Activated CD8-positive, alpha-beta T cell treated with anti-CD3 and anti-CD28 coated beads, Interleukin-2, amount 10 ng/mL, durations not matched to agents 7 days and 5 days (primary cell): ENCODE measurements at regions of chr6 and their contacts with region 1.

Region 1: GRCh38 chr6:25017932-25018567 is 82.3 kb upstream of the RIPOR2 start:
- DNase-seq: peak; percentile 89
- ATAC-seq: peak; percentile 86
- H3K4me3 Mint-ChIP-seq: no peak overlapping the region
- H3K27ac Mint-ChIP-seq: peak overlapping the region; percentile 62
- H3K4me1 Mint-ChIP-seq: peaks cover 40% of the 10 kb centered on the region
- H3K27me3 Mint-ChIP-seq: no peaks in the 10 kb centered on the region

Region 2: DNA sequence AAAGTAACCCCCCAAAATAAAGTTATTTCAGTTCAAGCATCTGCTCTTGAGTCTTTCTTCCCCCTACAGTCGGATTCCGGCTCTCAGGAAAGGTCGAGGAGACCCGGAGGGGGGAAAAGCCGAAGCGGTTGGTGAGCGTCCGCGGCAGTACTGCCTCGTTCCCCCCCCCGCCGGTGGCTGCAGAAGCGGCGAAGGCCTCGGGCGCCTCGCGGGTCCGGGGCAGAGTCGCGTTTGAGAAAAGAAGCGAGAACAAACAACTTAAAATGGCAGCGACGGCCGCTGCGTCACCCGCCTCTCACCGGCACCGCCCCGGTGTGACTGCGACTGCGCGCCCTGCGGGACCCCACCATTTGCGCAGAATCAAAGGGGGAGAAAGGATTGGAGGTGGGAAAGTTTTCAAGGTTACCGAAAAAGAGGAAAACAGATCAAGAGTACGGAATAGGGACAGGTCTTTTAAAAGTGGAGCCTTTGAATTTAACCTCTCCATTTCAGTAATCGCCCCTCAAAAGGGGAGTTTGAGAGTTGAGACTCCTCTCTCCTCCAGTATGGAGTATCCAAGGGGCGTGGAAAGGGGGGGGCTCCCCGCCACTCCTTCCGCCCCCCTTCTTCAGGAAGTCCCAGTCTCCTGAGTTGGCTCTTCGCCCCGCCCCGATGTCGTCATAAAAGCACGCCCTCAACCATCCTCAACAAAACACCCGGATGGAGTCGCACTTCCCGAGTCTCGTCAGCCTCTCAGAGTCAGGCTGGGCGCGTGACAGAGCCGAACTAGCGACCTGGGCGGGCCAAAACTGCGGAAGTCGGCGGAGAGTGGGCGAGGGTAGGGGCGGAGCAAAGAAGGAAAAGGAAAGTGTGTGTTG is 297.2 kb before region 1 on chr6:
- CTCF ChIA-PET with region 1: interaction called, 10 read pairs
- POLR2A ChIA-PET with region 1: no interaction called
- DNase-seq: peak; percentile 100
- ATAC-seq: peak; percentile 90
- H3K4me3 Mint-ChIP-seq: peak overlapping the region; percentile 98
- H3K27ac Mint-ChIP-seq: peak overlapping the region; percentile 99
- H3K4me1 Mint-ChIP-seq: peaks cover 27% of the 10 kb centered on the region
- H3K27me3 Mint-ChIP-seq: no peaks in the 10 kb centered on the region

Region 3: GRCh38 chr6:24848461-24848860 is 169.6 kb before region 1 on chr6:
- CTCF ChIA-PET with region 1: interaction called, 183 read pairs
- POLR2A ChIA-PET with region 1: no interaction called
- DNase-seq: no peak
- ATAC-seq: no peak
- H3K4me3 Mint-ChIP-seq: no peak overlapping the region
- H3K27ac Mint-ChIP-seq: peak overlapping the region; percentile 12
- H3K4me1 Mint-ChIP-seq: peaks cover 9% of the 10 kb centered on the region
- H3K27me3 Mint-ChIP-seq: no peaks in the 10 kb centered on the region

Region 4: DNA sequence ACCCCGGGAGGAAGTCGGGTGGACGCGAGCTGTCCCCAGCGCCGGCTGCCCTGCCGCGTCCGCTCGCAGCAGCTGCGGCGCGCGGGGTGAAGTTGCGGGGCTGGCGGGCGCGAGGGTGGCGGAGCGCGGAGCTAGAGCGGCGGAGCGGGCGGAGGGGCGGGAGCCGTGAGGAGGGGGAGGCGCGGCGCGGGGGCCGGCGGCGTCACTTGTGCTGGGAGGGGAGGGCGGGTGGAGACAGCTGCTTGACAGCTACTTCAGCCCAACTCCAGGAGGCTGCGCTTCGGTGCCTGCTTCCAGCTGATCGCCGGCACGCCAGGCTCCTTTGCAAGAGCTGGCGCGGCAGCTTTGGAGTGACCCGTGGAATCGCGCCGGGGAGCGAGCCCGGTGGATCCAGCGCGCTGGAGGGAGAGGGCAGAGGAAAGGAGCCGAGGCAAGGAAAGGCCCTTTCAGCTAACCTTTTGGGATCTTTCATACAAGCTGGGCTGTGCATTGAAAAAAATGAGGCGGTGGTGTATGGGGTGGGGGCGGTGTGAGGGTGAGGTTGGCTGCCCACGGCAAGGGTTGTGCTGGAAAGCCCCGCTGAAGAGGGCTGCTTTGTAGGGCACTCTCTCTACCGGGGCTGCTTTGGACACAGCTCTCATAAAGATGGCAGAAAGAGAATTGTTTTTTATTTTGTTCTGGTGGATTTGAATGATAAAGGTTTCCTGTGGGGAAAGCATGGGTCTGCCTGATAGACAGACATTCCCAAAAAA is 106.9 kb before region 1 on chr6:
- CTCF ChIA-PET with region 1: interaction called, 63 read pairs
- POLR2A ChIA-PET with region 1: interaction called, 3 read pairs
- DNase-seq: no peak
- ATAC-seq: peak; percentile 42
- H3K4me3 Mint-ChIP-seq: peak overlapping the region; percentile 81
- H3K27ac Mint-ChIP-seq: peak overlapping the region; percentile 87
- H3K4me1 Mint-ChIP-seq: peaks cover 94% of the 10 kb centered on the region
- H3K27me3 Mint-ChIP-seq: no peaks in the 10 kb centered on the region

Region 5: DNA sequence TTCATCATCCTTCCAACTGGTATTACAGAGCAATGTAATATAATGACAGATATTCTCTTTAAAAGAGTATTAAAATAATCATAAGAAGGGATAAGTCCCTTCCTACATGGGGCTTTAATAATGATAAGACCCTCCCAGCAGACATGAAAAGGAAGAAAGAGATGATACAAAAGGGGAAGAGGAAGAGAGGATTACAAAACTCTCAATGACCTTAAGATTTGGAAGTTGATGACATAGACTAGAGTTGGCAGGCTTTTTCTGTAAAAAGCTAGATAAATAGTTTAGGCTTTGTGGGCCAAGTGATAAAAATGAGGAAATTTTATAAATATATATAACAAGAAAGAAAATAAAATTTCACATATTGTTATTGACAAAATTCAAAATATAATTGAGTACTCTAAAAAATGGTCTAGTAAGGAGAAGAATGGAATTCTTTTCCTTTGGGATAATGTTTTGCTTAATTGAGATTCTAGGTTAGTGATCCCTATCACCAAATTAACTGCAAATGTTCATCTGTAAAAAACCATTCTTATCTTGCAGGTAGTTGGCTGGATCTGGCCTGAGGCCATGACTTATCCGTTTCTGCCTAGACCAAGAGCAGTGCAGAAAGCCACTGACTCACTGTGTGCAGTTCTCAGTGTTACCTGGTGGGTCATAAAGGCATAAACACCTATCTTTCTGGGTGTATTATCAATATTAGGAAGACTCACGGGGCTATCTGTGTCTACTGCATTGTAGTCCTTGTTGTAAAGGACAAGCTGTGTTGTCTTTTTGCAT is 93.3 kb before region 1 on chr6:
- CTCF ChIA-PET with region 1: interaction called, 37 read pairs
- POLR2A ChIA-PET with region 1: interaction called, 3 read pairs
- DNase-seq: peak; percentile 46
- ATAC-seq: no peak
- H3K4me3 Mint-ChIP-seq: peak overlapping the region; percentile 58
- H3K27ac Mint-ChIP-seq: peak overlapping the region; percentile 81
- H3K4me1 Mint-ChIP-seq: peaks cover 82% of the 10 kb centered on the region
- H3K27me3 Mint-ChIP-seq: no peaks in the 10 kb centered on the region

Region 6: GRCh38 chr6:25006565-25007001 is 11.5 kb before region 1 on chr6:
- CTCF ChIA-PET with region 1: interaction called, 70 read pairs
- POLR2A ChIA-PET with region 1: interaction called, 6 read pairs
- DNase-seq: peak; percentile 76
- ATAC-seq: peak; percentile 84
- H3K4me3 Mint-ChIP-seq: peak overlapping the region; percentile 58
- H3K27ac Mint-ChIP-seq: peak overlapping the region; percentile 92
- H3K4me1 Mint-ChIP-seq: peaks cover 82% of the 10 kb centered on the region
- H3K27me3 Mint-ChIP-seq: no peaks in the 10 kb centered on the region

Region 7: DNA sequence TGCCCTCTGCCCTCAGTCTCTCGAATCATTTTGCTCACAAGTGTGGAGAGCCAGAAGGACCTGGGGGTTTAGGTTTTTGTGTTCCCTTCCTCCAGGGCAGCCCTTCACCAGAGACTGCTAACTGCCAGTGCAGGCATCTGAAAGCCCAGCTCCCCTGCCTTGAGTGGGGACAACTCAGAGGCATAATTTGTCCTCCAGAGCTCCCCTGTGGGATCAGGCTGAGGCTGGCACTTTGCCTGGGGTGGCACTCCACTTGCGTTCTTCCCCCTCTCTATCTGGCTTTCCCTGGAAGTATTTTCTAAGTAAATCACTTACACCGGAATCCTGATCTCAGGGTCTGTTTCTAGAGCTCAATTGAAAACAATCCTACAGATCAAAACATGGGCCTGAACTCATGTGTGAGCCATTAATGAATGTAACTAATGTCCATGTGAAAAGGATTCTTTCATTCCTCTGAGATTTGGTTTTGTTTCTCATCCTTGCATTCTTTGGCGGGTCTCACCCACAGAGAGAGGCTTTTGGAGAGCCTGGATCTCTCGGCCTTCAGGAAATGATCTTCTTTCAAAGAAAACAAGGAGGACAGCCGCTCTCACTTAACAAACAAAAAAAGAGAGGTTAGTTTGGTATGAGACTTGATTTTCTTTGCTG is 43.4 kb after region 1 on chr6:
- CTCF ChIA-PET with region 1: interaction called, 11 read pairs
- POLR2A ChIA-PET with region 1: interaction called, 3 read pairs
- DNase-seq: no peak
- ATAC-seq: no peak
- H3K4me3 Mint-ChIP-seq: no peak overlapping the region
- H3K27ac Mint-ChIP-seq: peak overlapping the region; percentile 9
- H3K4me1 Mint-ChIP-seq: peaks cover 41% of the 10 kb centered on the region
- H3K27me3 Mint-ChIP-seq: no peaks in the 10 kb centered on the region

Region 8: DNA sequence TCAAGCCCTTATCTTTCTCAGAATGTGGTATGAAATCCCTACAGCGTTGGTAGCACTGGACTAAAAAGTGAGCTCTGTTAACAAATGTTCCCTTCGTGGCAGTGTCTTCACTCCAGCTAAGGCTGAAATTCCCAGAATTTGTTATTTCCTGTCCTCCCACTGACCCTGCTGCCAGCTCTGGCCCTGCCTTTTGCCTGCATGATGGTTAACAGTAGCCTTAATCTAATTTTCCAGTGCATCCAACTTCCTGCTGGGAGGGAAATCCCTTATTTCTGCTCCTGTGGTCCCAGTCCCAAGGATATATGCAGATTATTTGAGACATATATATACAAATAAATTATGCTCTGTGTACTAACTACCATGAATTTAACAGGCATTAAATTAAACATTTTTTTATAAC is 104.0 kb after region 1 on chr6:
- CTCF ChIA-PET with region 1: no interaction called
- POLR2A ChIA-PET with region 1: no interaction called
- DNase-seq: no peak
- ATAC-seq: no peak
- H3K4me3 Mint-ChIP-seq: no peak overlapping the region
- H3K27ac Mint-ChIP-seq: no peak overlapping the region
- H3K4me1 Mint-ChIP-seq: peaks cover 50% of the 10 kb centered on the region
- H3K27me3 Mint-ChIP-seq: no peaks in the 10 kb centered on the region